CD8-positive, alpha-beta T cell (primary cell): ENCODE measurements at regions of chr6 and their contacts with region 1.

Region 1: DNA sequence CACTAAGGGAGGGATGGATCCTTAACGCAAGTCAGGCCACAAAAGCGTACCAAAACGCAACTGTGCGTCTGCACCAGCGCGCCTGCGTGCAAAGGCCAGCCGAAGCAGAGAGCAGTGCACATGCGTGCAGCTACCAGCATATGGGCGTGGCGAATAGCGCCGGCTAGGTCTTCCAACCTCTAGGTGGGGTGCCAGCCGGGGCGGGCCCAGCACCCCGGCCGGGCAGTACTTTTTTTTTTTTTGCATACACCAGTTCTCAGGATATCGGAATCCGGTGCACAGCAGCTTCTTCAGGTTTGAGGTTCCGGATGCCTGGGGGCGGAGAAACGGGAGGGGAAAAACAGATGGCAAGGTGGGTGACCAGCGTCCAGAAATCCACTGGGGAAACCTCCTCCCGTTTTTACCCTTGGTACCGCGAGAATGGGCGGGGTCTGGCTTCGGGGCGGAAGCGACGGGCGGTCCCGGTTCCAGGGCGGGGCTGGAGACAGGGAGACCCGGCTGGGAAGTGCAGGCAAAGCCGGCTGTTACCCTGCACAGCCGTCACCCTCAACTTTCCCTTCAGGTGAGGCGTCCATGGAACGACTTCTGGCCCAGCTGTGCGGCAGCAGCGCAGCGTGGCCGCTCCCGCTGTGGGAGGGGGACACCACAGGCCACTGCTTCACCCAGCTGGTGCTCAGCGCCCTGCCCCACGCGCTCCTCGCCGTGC is at the start of gene ABCC10:
- DNase-seq: peak; percentile 89 to 98 (median 94)
- ATAC-seq: peak; percentile 94
- H3K4me3 ChIP-seq: peak within 1 kb of the TSS; percentile 78 to 91
- H3K4me3 Mint-ChIP-seq: peak within 1 kb of the TSS; percentile 94
- H3K27ac ChIP-seq: peak within 1 kb of the TSS; percentile 80 to 84
- H3K27ac Mint-ChIP-seq: peak within 1 kb of the TSS; percentile 98
- H3K4me1 ChIP-seq: peaks cover 11% of the 10 kb centered on the region
- H3K4me1 Mint-ChIP-seq: peaks cover 30% of the 10 kb centered on the region
- H3K27me3 ChIP-seq: no peaks in the 10 kb centered on the region
- H3K27me3 Mint-ChIP-seq: no peaks in the 10 kb centered on the region
- CTCF ChIP-seq: no peak
- total RNA-seq, gene ABCC10: 39.7 to 45.5 TPM

Region 2: GRCh38 chr6:43053545-43054205 is 373.9 kb before region 1 on chr6 and contains the start of gene CUL7:
- CTCF ChIA-PET with region 1: no interaction called
- POLR2A ChIA-PET with region 1: no interaction called
- intact Hi-C with region 1: loop called in 1 of 2 experiments (anchors 5 kb)
- DNase-seq: peak; percentile 71 to 94 (median 91)
- ATAC-seq: peak; percentile 99
- H3K4me3 ChIP-seq: peak within 1 kb of the TSS; percentile 81 to 83
- H3K4me3 Mint-ChIP-seq: peak within 1 kb of the TSS; percentile 92
- H3K27ac ChIP-seq: peak within 1 kb of the TSS; percentile 79 to 89
- H3K27ac Mint-ChIP-seq: peak within 1 kb of the TSS; percentile 97
- H3K4me1 ChIP-seq: peaks cover 25% of the 10 kb centered on the region
- H3K4me1 Mint-ChIP-seq: peaks cover 48% of the 10 kb centered on the region
- H3K27me3 ChIP-seq: no peaks in the 10 kb centered on the region
- H3K27me3 Mint-ChIP-seq: no peaks in the 10 kb centered on the region
- CTCF ChIP-seq: no peak
- total RNA-seq, gene CUL7: 5.2 to 5.4 TPM

Region 3: DNA sequence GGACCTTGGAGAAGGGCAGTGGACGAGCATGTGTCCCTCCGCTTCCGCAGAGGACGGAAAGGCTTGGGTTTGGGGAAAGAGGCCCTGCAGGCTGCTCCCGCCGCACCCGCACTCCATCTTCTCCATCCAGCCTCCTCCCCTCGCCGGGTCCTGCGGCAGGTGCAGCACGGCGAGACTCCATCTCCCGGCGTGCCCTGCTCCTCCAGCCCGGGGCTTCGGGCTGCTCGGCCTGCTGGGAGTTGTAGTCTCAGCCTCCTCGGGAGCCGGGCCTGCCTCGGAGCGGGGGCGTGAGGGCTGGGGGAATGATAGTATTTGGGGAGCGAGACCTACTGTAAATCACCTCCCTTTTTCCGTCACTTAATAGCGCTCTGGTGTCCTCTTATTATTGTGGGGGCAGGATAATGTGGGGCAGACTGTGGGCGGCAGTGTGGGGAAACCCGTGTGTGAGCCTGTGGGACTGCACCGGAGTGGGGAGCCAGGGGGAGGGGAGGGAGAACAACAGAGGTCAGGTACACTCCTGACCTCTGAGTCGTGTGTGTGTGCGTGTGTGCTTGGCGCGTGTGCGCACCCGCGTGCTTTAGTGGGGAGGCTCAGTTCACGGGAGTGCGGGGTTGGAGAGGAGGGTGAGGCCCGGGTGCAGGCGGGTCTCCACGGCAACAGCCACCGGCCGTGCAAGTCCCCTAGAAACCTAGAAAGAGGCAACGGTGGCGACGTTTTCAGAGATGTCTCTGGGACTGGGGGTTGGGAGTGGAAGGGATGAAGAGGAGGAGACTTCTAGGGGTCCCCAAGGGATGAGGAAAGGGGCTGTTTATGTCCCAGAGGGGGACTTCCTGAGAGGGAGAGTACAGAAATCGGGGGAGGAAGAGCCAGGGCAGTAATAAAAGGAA is 180.2 kb before region 1 on chr6:
- CTCF ChIA-PET with region 1: no interaction called
- POLR2A ChIA-PET with region 1: no interaction called
- intact Hi-C with region 1: loop called in 1 of 2 experiments (anchors 1 kb)
- DNase-seq: peak; percentile 59 to 87 (median 78)
- ATAC-seq: peak; percentile 95
- H3K4me3 ChIP-seq: peak overlapping the region; percentile 65 to 71
- H3K4me3 Mint-ChIP-seq: no peak overlapping the region
- H3K27ac ChIP-seq: peak overlapping the region; percentile 19 to 40
- H3K27ac Mint-ChIP-seq: peak overlapping the region; percentile 88
- H3K4me1 ChIP-seq: peaks cover 11% of the 10 kb centered on the region
- H3K4me1 Mint-ChIP-seq: peaks cover 15% of the 10 kb centered on the region
- H3K27me3 ChIP-seq: peaks cover 11 to 22% of the 10 kb centered on the region in 2 experiments
- H3K27me3 Mint-ChIP-seq: peaks cover 16% of the 10 kb centered on the region
- CTCF ChIP-seq: no peak

Region 4: GRCh38 chr6:43386492-43386891 is 41.1 kb before region 1 on chr6:
- CTCF ChIA-PET with region 1: interaction called, 4 read pairs
- POLR2A ChIA-PET with region 1: interaction called, 4 read pairs
- intact Hi-C with region 1: loop called (anchors 1 to 5 kb)
- DNase-seq: peak in 2 of 9 experiments; percentile 43 to 61
- ATAC-seq: no peak
- H3K4me3 ChIP-seq: no peak overlapping the region
- H3K4me3 Mint-ChIP-seq: no peak overlapping the region
- H3K27ac ChIP-seq: no peak overlapping the region
- H3K27ac Mint-ChIP-seq: no peak overlapping the region
- H3K4me1 ChIP-seq: peaks cover 54% of the 10 kb centered on the region
- H3K4me1 Mint-ChIP-seq: peaks cover 66% of the 10 kb centered on the region
- H3K27me3 ChIP-seq: peaks cover 0 to 7% of the 10 kb centered on the region in 2 experiments
- H3K27me3 Mint-ChIP-seq: peaks cover 6% of the 10 kb centered on the region
- CTCF ChIP-seq: no peak

Region 5: GRCh38 chr6:43477235-43478007 is 49.9 kb after region 1 on chr6 and contains the start of gene TJAP1:
- CTCF ChIA-PET with region 1: no interaction called
- POLR2A ChIA-PET with region 1: interaction called, 8 read pairs
- intact Hi-C with region 1: loop called (anchors 1 to 2 kb)
- DNase-seq: peak; percentile 93 to 98 (median 96)
- ATAC-seq: peak; percentile 99
- H3K4me3 ChIP-seq: peak within 1 kb of the TSS; percentile 64 to 83
- H3K4me3 Mint-ChIP-seq: peak within 1 kb of the TSS; percentile 95
- H3K27ac ChIP-seq: peak within 1 kb of the TSS; percentile 93 to 95
- H3K27ac Mint-ChIP-seq: peak within 1 kb of the TSS; percentile 97
- H3K4me1 ChIP-seq: peaks cover 17% of the 10 kb centered on the region
- H3K4me1 Mint-ChIP-seq: peaks cover 48% of the 10 kb centered on the region
- H3K27me3 ChIP-seq: no peaks in the 10 kb centered on the region
- H3K27me3 Mint-ChIP-seq: no peaks in the 10 kb centered on the region
- CTCF ChIP-seq: no peak
- total RNA-seq, gene TJAP1: 29.2 to 29.7 TPM

Region 6: GRCh38 chr6:43629505-43630300 is 202.1 kb after region 1 on chr6:
- CTCF ChIA-PET with region 1: no interaction called
- POLR2A ChIA-PET with region 1: no interaction called
- intact Hi-C with region 1: loop called in 1 of 2 experiments (anchors 1 kb)
- DNase-seq: peak; percentile 66 to 96 (median 84)
- ATAC-seq: peak; percentile 51
- H3K4me3 ChIP-seq: peak overlapping the region; percentile 77 to 82
- H3K4me3 Mint-ChIP-seq: peak overlapping the region; percentile 98
- H3K27ac ChIP-seq: peak overlapping the region; percentile 53 to 75
- H3K27ac Mint-ChIP-seq: peak overlapping the region; percentile 95
- H3K4me1 ChIP-seq: peaks cover 15% of the 10 kb centered on the region
- H3K4me1 Mint-ChIP-seq: peaks cover 39% of the 10 kb centered on the region
- H3K27me3 ChIP-seq: no peaks in the 10 kb centered on the region
- H3K27me3 Mint-ChIP-seq: no peaks in the 10 kb centered on the region
- CTCF ChIP-seq: no peak